ENCODE measurements at regions of chr10 and their contacts with region 1.

Region 1: DNA sequence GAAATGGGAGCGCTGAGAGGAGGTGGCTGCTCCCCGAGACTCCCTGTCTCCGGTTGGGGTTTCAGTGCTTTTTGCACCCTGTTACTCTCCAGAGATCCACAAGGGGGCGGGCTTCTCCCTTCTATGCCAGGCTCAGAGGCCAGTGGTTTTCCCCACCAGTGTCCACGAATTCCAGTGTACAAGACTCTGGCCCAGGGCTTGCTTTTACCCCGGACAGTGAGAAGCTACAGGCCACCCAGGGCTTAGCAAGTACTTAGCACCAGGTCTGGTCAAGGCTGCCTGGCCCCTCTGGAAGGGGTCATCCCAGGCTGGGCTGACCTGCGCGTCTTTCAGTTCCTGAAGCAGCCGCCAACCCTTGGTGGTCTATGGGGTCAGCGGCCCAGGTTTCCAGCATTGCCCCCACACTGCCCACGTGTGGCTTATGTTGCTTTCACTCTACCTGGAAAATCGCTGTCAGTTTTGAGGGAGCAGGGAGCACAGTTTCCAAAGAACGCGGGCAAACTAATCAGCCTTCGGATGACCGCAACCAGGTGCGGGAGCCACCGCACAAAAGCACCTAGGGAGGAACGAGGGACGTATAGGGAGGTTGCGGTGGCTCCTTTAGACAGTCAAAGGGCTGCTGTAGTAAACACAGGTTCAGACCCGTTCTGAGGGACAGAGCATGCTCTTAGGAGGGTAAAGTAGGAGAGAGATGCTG is 6.8 kb downstream of the CYP26A1 start:
- DNase-seq: peak; percentile 61
- H3K4me3 ChIP-seq: peak overlapping the region; percentile 24
- H3K27ac ChIP-seq: no peak overlapping the region
- H3K4me1 ChIP-seq: no peaks in the 10 kb centered on the region
- H3K27me3 ChIP-seq: peaks cover 30% of the 10 kb centered on the region
- CTCF ChIP-seq: peak; percentile 91

Region 2: GRCh38 chr10:92901819-92902251 is 178.7 kb before region 1 on chr10:
- CTCF ChIA-PET with region 1: no interaction called
- POLR2A ChIA-PET with region 1: interaction called, 10 read pairs
- intact Hi-C with region 1: no loop called
- DNase-seq: no peak
- H3K4me3 ChIP-seq: no peak overlapping the region
- H3K27ac ChIP-seq: no peak overlapping the region
- H3K4me1 ChIP-seq: no peaks in the 10 kb centered on the region
- H3K27me3 ChIP-seq: no peaks in the 10 kb centered on the region
- CTCF ChIP-seq: no peak

Region 3: DNA sequence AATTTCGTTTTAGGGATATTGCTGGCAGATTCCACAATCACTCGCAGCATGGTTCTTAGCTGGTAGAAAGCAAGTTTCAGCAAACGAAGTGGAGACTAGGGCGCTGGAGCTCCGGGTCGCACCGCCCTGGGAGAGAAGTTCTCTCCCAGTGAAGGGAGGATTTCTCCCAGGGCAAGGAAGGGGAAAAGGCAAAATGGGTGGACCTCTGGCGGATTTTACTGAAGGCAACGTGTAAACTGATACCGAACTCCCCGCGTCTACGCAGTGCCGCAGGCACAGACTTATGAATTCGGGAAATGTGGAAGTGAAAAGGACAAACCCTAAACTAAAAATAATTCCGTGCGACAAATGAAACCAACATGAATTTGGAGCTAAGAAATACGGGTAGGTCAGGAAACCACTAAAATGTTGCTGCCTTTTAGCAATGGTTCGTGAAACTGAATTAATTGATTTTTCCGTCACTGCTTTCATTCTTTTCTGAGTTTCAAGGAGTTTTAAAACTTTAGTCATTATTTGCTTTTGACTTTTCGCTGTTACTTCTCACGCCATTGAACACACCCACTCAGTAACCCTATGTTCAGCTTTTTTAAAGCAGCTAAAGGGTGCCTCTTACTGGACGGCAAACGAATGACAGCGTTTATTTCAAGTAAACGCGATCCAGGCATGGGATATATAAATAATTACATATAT is 401.8 kb after region 1 on chr10 and contains the start of gene MYOF:
- CTCF ChIA-PET with region 1: no interaction called
- POLR2A ChIA-PET with region 1: no interaction called
- intact Hi-C with region 1: loop called (anchors 10 kb)
- DNase-seq: peak; percentile 85
- H3K4me3 ChIP-seq: peak within 1 kb of the TSS; percentile 65
- H3K27ac ChIP-seq: peak within 1 kb of the TSS; percentile 58
- H3K4me1 ChIP-seq: no peaks in the 10 kb centered on the region
- H3K27me3 ChIP-seq: no peaks in the 10 kb centered on the region
- CTCF ChIP-seq: peak; percentile 65
- total RNA-seq, gene MYOF: 15.9 and 24.2 TPM in 2 replicates

Region 4: DNA sequence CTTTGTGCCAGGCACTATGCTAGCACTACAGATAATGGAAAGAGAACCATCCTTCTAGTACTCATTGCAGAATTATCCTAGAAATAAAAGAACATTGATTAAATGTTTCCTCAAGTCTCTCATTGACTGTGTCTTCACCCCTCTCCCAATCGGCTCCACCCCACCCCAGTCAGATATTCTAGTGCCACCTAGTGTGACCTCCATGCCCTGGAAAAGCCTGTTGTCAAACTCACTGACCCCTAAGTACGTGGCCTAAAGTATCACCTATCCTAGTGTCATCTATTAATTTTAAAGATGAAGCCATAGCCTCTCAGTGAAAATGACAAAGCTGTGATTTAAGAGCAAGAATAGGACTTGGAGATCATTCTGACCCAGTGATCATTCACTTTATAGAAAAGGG is 703.6 kb after region 1 on chr10:
- CTCF ChIA-PET with region 1: no interaction called
- POLR2A ChIA-PET with region 1: no interaction called
- intact Hi-C with region 1: no loop called
- DNase-seq: no peak
- H3K4me3 ChIP-seq: no peak overlapping the region
- H3K27ac ChIP-seq: no peak overlapping the region
- H3K4me1 ChIP-seq: no peaks in the 10 kb centered on the region
- H3K27me3 ChIP-seq: no peaks in the 10 kb centered on the region
- CTCF ChIP-seq: no peak